Posterior vena cava (tissue), 2 donors: ENCODE measurements at regions of chr16 and their contacts with region 1.

Region 1: GRCh38 chr16:48164907-48165726 is 9.3 kb upstream of the ABCC12 start:
- DNase-seq: peak; percentile 91

Region 2: GRCh38 chr16:47037746-47038458 is 1127.2 kb before region 1 on chr16:
- intact Hi-C with region 1: loop called in 1 of 2 experiments (anchors 10 kb)
- DNase-seq: peak; percentile 96